MCF 10A (cell line): ENCODE measurements at regions of chr20 and their contacts with region 1.

Region 1: GRCh38 chr20:33810885-33811777 is at the start of gene CHMP4B:
- DNase-seq: peak; percentile 99
- H3K4me3 Mint-ChIP-seq: peak within 1 kb of the TSS; percentile 93
- H3K27ac Mint-ChIP-seq: peak within 1 kb of the TSS; percentile 100
- H3K4me1 Mint-ChIP-seq: peaks cover 19% of the 10 kb centered on the region
- H3K27me3 Mint-ChIP-seq: no peaks in the 10 kb centered on the region
- CTCF ChIP-seq: no peak
- total RNA-seq, gene CHMP4B: 77.6 and 95.2 TPM in 2 replicates

Region 2: GRCh38 chr20:33686100-33686983 is 124.8 kb before region 1 on chr20 and contains the start of gene E2F1:
- CTCF ChIA-PET with region 1: no interaction called
- POLR2A ChIA-PET with region 1: interaction called, 3 read pairs
- intact Hi-C with region 1: loop called (anchors 10 kb)
- DNase-seq: peak; percentile 92
- H3K4me3 Mint-ChIP-seq: peak within 1 kb of the TSS; percentile 72
- H3K27ac Mint-ChIP-seq: no peak within 1 kb of the TSS
- H3K4me1 Mint-ChIP-seq: peaks cover 13% of the 10 kb centered on the region
- H3K27me3 Mint-ChIP-seq: no peaks in the 10 kb centered on the region
- CTCF ChIP-seq: no peak
- total RNA-seq, gene E2F1: 1.4 and 3.7 TPM in 2 replicates

Region 3: DNA sequence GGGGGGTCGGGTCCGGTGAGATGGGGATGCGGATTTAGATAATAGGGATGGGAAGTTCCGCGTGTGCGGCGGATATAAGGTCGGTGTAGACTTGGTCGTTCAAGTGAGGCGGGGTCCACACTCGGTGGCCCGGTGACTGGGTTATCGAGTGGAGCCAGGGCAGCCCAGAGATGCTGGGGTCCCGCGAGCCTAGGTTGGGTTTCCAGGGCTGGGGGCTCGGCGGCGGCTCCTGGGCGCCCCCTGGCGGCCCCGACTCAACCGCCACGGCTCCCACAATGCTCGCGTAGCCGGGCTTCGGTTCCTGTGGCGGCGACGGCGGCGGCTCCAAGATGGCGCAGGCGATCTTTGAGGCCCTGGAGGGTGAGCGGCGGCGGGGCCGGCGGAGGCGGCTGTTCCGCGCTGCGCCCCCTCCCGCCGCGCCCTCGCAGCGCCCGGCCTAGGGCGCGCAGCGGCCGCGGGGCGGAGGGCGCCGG is 79.4 kb before region 1 on chr20 and contains the start of gene ZNF341:
- CTCF ChIA-PET with region 1: interaction called, 5 read pairs
- POLR2A ChIA-PET with region 1: interaction called, 63 read pairs
- intact Hi-C with region 1: loop called (anchors 5 kb)
- DNase-seq: peak; percentile 79
- H3K4me3 Mint-ChIP-seq: peak within 1 kb of the TSS; percentile 86
- H3K27ac Mint-ChIP-seq: peak within 1 kb of the TSS; percentile 91
- H3K4me1 Mint-ChIP-seq: peaks cover 20% of the 10 kb centered on the region
- H3K27me3 Mint-ChIP-seq: no peaks in the 10 kb centered on the region
- CTCF ChIP-seq: peak; percentile 82
- total RNA-seq, gene ZNF341: 2.0 and 2.5 TPM in 2 replicates

Region 4: DNA sequence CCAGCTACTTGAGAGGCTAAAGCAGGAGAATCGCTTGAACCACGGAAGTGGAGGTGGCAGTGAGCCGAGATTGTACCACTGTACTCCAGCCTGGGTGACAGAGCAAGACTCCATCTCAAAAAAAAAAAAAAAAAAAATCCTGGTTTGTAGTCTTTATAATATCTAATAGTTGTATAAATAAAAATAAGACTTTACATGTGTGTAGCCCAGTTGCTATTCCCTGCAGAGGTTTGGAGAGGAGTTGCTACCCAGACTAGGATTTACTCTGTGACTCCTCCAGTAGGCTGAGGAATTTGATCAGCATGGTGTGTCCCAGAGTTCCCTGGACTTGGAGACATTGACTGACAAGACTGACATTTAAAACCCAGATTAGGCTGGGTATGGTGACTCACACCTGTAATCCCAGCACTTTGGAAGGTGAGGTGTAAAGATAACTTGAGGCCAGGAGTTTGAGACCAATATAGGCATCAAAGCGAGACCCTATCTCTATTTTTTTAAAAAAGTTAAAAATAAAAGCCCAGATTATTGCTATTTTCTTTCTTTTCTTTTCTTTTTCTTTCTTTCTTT is 10.2 kb after region 1 on chr20:
- CTCF ChIA-PET with region 1: interaction called, 7 read pairs
- POLR2A ChIA-PET with region 1: interaction called, 36 read pairs
- intact Hi-C with region 1: no loop called
- DNase-seq: no peak
- H3K4me3 Mint-ChIP-seq: no peak overlapping the region
- H3K27ac Mint-ChIP-seq: no peak overlapping the region
- H3K4me1 Mint-ChIP-seq: peaks cover 21% of the 10 kb centered on the region
- H3K27me3 Mint-ChIP-seq: no peaks in the 10 kb centered on the region
- CTCF ChIP-seq: no peak

Region 5: DNA sequence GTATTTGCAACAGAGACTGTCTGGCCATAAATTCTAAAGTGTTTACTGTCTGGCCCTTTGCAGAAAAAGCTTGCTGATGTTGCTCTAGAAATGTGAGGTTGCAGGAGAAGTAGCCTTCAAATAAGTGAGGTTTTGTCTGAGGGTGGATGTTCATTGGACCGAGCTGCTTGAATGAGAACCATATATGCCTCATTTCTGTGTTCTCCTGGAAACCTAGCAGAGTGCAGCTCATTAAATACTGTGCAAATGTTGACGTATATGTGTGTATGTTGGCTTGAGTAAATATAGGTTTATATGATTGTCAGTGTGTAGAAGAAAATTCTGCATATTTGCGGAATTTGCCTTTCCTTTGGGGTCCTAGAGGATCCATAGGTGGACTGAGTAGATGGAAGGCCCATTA is 39.0 kb after region 1 on chr20:
- CTCF ChIA-PET with region 1: interaction called, 4 read pairs
- POLR2A ChIA-PET with region 1: interaction called, 10 read pairs
- intact Hi-C with region 1: no loop called
- DNase-seq: no peak
- H3K4me3 Mint-ChIP-seq: no peak overlapping the region
- H3K27ac Mint-ChIP-seq: no peak overlapping the region
- H3K4me1 Mint-ChIP-seq: no peaks in the 10 kb centered on the region
- H3K27me3 Mint-ChIP-seq: no peaks in the 10 kb centered on the region
- CTCF ChIP-seq: no peak

Region 6: GRCh38 chr20:34129518-34130162 is 318.5 kb after region 1 on chr20:
- CTCF ChIA-PET with region 1: no interaction called
- POLR2A ChIA-PET with region 1: no interaction called
- intact Hi-C with region 1: loop called (anchors 1 kb)
- DNase-seq: peak; percentile 79
- H3K4me3 Mint-ChIP-seq: peak overlapping the region; percentile 17
- H3K27ac Mint-ChIP-seq: no peak overlapping the region
- H3K4me1 Mint-ChIP-seq: no peaks in the 10 kb centered on the region
- H3K27me3 Mint-ChIP-seq: peaks cover 23% of the 10 kb centered on the region
- CTCF ChIP-seq: peak; percentile 73